HCT116 (cell line): ENCODE measurements at regions of chr7 and their contacts with region 1.

Region 1: DNA sequence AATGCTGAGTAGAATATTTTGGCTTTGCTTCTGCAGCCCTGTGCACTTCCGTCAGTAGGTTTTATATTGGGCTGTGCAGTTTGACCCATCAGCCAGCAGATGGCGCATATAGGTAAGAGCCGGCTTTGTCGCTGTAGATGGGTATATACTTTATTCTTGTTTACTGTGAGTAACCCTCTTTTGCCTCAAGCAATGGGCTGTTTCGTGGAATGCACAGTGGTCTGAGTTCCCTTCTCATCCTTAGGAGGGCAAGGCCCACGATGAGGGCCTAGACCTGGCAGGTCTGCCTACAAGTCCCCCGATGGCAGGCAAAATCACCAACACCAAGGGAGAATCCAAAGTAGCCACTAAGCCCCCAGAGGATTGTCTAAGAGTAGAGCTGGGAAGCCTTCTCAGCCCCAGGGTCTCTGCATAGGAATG is 1002.9 kb upstream of the KCND2 start:
- DNase-seq: peak; percentile 56
- ATAC-seq: peak; percentile 97
- H3K4me3 ChIP-seq: no peak overlapping the region
- H3K27ac ChIP-seq: no peak overlapping the region
- H3K4me1 ChIP-seq: no peaks in the 10 kb centered on the region
- H3K27me3 ChIP-seq: no peaks in the 10 kb centered on the region
- CTCF ChIP-seq: peak; percentile 61 to 91 (median 87); a peak in 5 of 6 replicates
- POLR2A ChIP-seq: no peak
- RAD21 ChIP-seq: peak; percentile 78

Region 2: GRCh38 chr7:118995350-118995749 is 274.7 kb before region 1 on chr7:
- CTCF ChIA-PET with region 1: no interaction called
- POLR2A ChIA-PET with region 1: no interaction called
- RAD21 ChIA-PET with region 1: no interaction called
- intact Hi-C with region 1: no loop called
- DNase-seq: no peak
- ATAC-seq: no peak
- H3K4me3 ChIP-seq: no peak overlapping the region
- H3K27ac ChIP-seq: no peak overlapping the region
- H3K4me1 ChIP-seq: no peaks in the 10 kb centered on the region
- H3K27me3 ChIP-seq: no peaks in the 10 kb centered on the region
- CTCF ChIP-seq: no peak
- POLR2A ChIP-seq: no peak
- RAD21 ChIP-seq: no peak

Region 3: GRCh38 chr7:119408596-119408995 is 138.5 kb after region 1 on chr7:
- CTCF ChIA-PET with region 1: no interaction called
- POLR2A ChIA-PET with region 1: no interaction called
- RAD21 ChIA-PET with region 1: no interaction called
- intact Hi-C with region 1: no loop called
- DNase-seq: no peak
- ATAC-seq: no peak
- H3K4me3 ChIP-seq: no peak overlapping the region
- H3K27ac ChIP-seq: no peak overlapping the region
- H3K4me1 ChIP-seq: no peaks in the 10 kb centered on the region
- H3K27me3 ChIP-seq: no peaks in the 10 kb centered on the region
- CTCF ChIP-seq: no peak
- POLR2A ChIP-seq: no peak
- RAD21 ChIP-seq: no peak

Region 4: DNA sequence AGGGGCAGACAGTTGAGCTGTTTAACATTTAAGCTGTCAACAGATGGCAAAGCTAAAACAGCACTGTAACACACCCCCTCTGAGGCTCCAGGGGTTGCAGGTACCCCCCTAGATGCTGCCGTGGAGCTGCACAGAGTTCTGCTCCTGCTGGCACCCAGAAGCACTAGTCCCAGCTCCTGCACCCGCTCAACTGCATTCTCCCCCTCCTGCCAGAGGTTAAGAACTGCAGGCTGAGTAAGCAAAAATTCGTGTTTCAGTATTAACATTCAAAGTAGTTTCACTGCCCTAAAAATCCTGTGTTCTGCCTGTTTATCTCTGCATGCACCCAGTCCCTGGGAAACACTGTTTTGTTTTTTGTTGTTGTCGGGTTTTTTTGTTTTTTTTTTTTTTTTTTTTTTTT is 212.2 kb after region 1 on chr7:
- CTCF ChIA-PET with region 1: no interaction called
- POLR2A ChIA-PET with region 1: no interaction called
- RAD21 ChIA-PET with region 1: no interaction called
- intact Hi-C with region 1: loop called (anchors 10 kb)
- DNase-seq: peak; percentile 43
- ATAC-seq: peak; percentile 99
- H3K4me3 ChIP-seq: no peak overlapping the region
- H3K27ac ChIP-seq: no peak overlapping the region
- H3K4me1 ChIP-seq: peaks cover 0 to 9% of the 10 kb centered on the region in 2 experiments; a peak in 2 of 4 replicates
- H3K27me3 ChIP-seq: no peaks in the 10 kb centered on the region
- CTCF ChIP-seq: peak in 2 of 3 experiments; percentile 58 to 64; a peak in 4 of 6 replicates
- POLR2A ChIP-seq: no peak
- RAD21 ChIP-seq: peak; percentile 45; the same call in 1 of the 2 replicates

Region 5: DNA sequence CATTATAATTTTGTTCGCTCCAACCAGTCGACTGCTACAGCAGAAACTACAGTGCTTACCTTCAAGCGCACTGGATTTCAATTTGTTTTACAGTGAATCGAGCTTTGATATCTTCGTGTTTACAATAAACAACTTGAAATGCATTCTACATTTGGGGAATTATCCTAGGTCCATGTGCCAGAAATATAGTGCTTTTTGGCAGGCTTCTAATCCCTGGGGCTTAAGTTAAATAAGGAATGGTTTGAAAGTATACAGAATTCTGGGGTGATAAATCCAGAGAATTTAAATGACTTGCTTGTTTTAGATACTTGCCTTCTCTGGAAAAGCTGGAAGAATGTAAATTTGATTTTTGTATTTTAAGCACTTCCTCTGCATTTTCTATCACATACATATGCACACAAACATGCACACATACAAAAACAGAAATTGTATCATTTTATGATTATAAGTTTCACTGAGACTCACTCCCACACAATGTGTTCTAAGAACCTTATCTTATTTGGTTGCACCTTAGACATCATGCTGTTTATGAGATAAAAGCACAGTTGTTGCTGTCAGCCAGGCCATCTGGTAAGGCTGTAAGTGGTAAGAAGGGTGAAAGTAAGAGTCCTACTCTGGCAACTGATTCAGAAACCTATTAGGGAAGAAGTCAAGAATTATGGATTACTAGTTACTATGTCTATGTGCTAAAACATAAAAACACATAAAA is 655.7 kb after region 1 on chr7:
- CTCF ChIA-PET with region 1: no interaction called
- POLR2A ChIA-PET with region 1: no interaction called
- RAD21 ChIA-PET with region 1: no interaction called
- intact Hi-C with region 1: no loop called
- DNase-seq: no peak
- ATAC-seq: no peak
- H3K4me3 ChIP-seq: no peak overlapping the region
- H3K27ac ChIP-seq: no peak overlapping the region
- H3K4me1 ChIP-seq: no peaks in the 10 kb centered on the region
- H3K27me3 ChIP-seq: no peaks in the 10 kb centered on the region
- CTCF ChIP-seq: no peak
- POLR2A ChIP-seq: no peak
- RAD21 ChIP-seq: no peak

Region 6: GRCh38 chr7:120272261-120272660 is 1002.2 kb after region 1 on chr7:
- CTCF ChIA-PET with region 1: no interaction called
- POLR2A ChIA-PET with region 1: no interaction called
- RAD21 ChIA-PET with region 1: no interaction called
- intact Hi-C with region 1: loop called (anchors 5 kb)
- DNase-seq: peak; percentile 37
- ATAC-seq: peak; percentile 78
- H3K4me3 ChIP-seq: no peak overlapping the region
- H3K27ac ChIP-seq: no peak overlapping the region
- H3K4me1 ChIP-seq: no peaks in the 10 kb centered on the region
- H3K27me3 ChIP-seq: no peaks in the 10 kb centered on the region
- CTCF ChIP-seq: peak; percentile 59 to 73 (median 61); a peak in 5 of 6 replicates
- POLR2A ChIP-seq: no peak
- RAD21 ChIP-seq: peak; percentile 82